Pancreas (tissue), 10 donors: ENCODE measurements at regions of chr18 and their contacts with region 1.

Region 1: GRCh38 chr18:79378542-79379250 is 17.0 kb upstream of the NFATC1 start:
- DNase-seq: peak; percentile 54 to 91 (median 73)
- ATAC-seq: peak; percentile 69 to 95 (median 87)
- H3K4me3 ChIP-seq: no peak overlapping the region
- H3K27ac ChIP-seq: no peak overlapping the region
- H3K4me1 ChIP-seq: no peaks in the 10 kb centered on the region
- H3K27me3 ChIP-seq: no peaks in the 10 kb centered on the region
- CTCF ChIP-seq: peak; percentile 71 to 90 (median 86)

Region 2: DNA sequence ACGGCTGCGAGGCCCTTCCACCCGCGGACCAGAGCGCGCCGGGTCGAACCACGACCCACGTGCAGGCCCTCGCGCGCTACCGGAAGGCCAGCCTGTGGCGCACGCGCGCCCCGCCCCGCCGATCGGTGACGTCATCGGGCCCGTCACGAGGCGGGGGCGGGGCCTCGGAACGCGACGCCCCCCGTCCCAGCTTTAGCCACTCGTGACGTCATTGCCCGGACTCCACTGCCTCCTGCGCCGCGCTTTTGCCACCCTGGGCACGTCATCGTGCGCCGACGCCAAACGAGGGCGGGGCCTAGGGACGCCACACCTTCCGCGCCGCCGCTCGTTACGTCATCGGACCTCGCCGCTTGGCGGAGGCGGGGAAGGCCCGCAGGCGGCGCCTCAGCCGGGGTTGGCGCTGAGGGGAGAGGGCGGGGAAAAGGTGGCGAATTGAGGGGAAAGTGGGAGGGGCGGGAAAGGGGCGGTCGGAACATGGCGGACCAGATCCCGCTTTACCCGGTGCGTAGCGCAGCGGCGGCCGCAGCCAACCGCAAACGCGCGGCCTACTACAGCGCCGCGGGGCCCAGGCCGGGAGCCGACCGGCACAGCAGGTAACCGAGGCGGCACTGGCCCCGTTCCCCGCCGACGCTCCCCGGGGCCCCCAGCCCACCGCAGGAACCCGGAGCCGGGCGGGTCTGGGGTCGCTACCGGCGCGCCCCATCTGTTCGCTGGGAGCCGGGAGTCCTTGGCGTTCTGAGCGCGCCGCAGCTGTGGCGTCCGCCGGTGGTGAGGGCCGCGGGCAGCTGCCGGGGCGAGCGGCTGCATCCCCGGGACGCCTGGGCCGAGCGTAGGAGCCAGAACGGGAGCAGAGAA is 309.5 kb before region 1 on chr18 and contains the start of gene ATP9B:
- intact Hi-C with region 1: no loop called
- DNase-seq: peak; percentile 94 to 99 (median 98)
- ATAC-seq: peak; percentile 93 to 98 (median 94)
- H3K4me3 ChIP-seq: peak within 1 kb of the TSS; percentile 94 to 100 (median 97)
- H3K27ac ChIP-seq: peak within 1 kb of the TSS; percentile 85 to 90 (median 87)
- H3K4me1 ChIP-seq: peaks cover 0 to 13% (median 11%) of the 10 kb centered on the region in 3 donors
- H3K27me3 ChIP-seq: no peaks in the 10 kb centered on the region
- CTCF ChIP-seq: no peak
- total RNA-seq, gene ATP9B: 13.2 to 19.0 (median 16.0) TPM

Region 3: DNA sequence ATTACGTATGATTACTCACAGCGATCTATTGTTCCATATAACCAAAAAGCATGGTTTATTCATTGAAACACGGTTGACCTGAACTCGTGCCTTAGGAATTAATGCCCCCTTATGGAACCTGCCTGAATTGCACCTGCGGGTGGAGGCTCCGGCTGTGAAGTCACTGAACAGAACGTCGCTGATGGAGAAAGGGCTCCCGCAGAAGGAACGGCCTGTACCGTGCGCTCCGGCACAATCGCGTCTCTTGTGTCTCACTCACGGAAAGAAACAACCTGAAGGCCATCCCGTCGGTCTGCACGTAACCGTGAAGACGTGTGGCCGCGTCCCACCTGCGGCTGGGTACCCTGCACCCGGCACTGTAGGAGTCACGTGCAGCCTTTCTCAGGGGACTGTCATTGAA is 150.2 kb after region 1 on chr18:
- intact Hi-C with region 1: loop called in 2 of 3 experiments (anchors 5 kb)
- DNase-seq: peak in 3 of 6 donors; percentile 46 to 67 (median 63)
- ATAC-seq: peak in 3 of 4 donors; percentile 78 to 87 (median 79)
- H3K4me3 ChIP-seq: no peak overlapping the region
- H3K27ac ChIP-seq: no peak overlapping the region
- H3K4me1 ChIP-seq: no peaks in the 10 kb centered on the region
- H3K27me3 ChIP-seq: no peaks in the 10 kb centered on the region
- CTCF ChIP-seq: peak; percentile 52 to 72 (median 70)

Region 4: DNA sequence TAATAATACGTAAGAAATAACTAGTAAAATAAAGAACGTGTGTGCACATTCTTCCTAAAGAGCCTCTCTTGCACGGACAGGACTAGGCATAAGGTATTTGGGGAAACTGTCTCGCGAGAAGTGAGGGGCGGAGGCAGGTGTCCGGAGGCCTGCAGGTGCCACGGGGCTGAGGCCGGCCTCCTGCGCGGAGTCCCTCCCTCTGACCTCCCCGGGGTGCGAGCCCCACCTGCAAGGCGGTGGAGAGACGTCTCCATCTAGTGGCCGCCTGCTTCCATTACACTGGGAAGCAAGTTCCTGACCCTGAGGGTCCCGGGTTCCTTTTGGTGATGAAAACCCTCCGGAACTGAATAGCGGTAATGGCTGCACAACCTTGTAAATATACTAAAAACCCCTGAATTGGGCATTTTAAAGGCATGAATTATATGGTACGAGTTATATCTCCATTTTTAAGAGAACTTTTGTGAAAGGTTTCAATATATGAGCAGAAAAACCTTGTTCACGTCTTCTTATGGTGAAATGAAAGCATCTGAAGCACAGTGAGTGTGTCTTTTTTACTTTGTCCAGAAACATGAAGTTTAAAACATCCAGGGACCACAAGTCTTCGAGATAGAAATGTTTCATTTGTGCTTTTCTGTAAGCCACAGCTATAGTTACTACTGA is 265.4 kb after region 1 on chr18:
- intact Hi-C with region 1: loop called in 2 of 3 experiments (anchors 5 kb)
- DNase-seq: peak; percentile 24 to 81 (median 64)
- ATAC-seq: peak; percentile 68 to 94 (median 93)
- H3K4me3 ChIP-seq: no peak overlapping the region
- H3K27ac ChIP-seq: no peak overlapping the region
- H3K4me1 ChIP-seq: no peaks in the 10 kb centered on the region
- H3K27me3 ChIP-seq: no peaks in the 10 kb centered on the region
- CTCF ChIP-seq: peak; percentile 77 to 97 (median 92)